Activated CD4-positive, alpha-beta memory T cell treated with anti-CD3 and anti-CD28 coated beads, Interleukin-2, amount 10 ng/mL, durations not matched to agents 7 days and 5 days (primary cell): ENCODE measurements at regions of chr1 and their contacts with region 1.

Region 1: GRCh38 chr1:185559684-185560331 is 174.4 kb upstream of the HMCN1 start:
- DNase-seq: peak; percentile 80
- H3K4me3 Mint-ChIP-seq: no peak overlapping the region
- H3K27ac Mint-ChIP-seq: peak overlapping the region; percentile 86
- H3K4me1 Mint-ChIP-seq: peaks cover 48% of the 10 kb centered on the region
- H3K27me3 Mint-ChIP-seq: no peaks in the 10 kb centered on the region

Region 2: GRCh38 chr1:185439727-185440415 is 119.9 kb before region 1 on chr1:
- CTCF ChIA-PET with region 1: no interaction called
- POLR2A ChIA-PET with region 1: interaction called, 10 read pairs
- DNase-seq: peak; percentile 56
- H3K4me3 Mint-ChIP-seq: no peak overlapping the region
- H3K27ac Mint-ChIP-seq: no peak overlapping the region
- H3K4me1 Mint-ChIP-seq: peaks cover 13% of the 10 kb centered on the region
- H3K27me3 Mint-ChIP-seq: no peaks in the 10 kb centered on the region

Region 3: GRCh38 chr1:185595835-185596667 is 36.2 kb after region 1 on chr1:
- CTCF ChIA-PET with region 1: interaction called, 22 read pairs
- POLR2A ChIA-PET with region 1: no interaction called
- DNase-seq: peak; percentile 55
- H3K4me3 Mint-ChIP-seq: no peak overlapping the region
- H3K27ac Mint-ChIP-seq: no peak overlapping the region
- H3K4me1 Mint-ChIP-seq: peaks cover 16% of the 10 kb centered on the region
- H3K27me3 Mint-ChIP-seq: no peaks in the 10 kb centered on the region

Region 4: DNA sequence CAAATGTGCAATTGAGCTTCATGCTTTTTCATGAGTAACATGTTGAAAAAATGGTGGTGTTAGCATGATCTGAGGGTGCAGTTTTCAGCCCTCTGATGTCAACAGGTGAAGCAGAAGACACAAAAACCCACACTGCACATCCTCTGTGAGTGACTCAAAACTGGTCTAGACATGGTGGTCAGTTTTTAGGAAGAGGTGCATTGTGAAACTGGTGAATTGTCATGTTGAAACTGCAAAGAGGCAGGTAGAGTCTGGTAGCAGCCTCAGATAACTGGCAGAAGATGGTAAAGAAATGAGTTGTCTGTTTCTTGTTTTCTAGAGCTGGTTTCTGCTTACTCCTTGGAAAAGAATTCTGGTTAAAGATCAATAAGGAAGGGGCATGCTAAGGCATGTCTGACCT is 77.0 kb after region 1 on chr1:
- CTCF ChIA-PET with region 1: interaction called, 9 read pairs
- POLR2A ChIA-PET with region 1: interaction called, 12 read pairs
- DNase-seq: peak; percentile 61
- H3K4me3 Mint-ChIP-seq: no peak overlapping the region
- H3K27ac Mint-ChIP-seq: peak overlapping the region; percentile 82
- H3K4me1 Mint-ChIP-seq: peaks cover 24% of the 10 kb centered on the region
- H3K27me3 Mint-ChIP-seq: no peaks in the 10 kb centered on the region